ENCODE measurements at regions of chr1 and their contacts with region 1.

Region 1: GRCh38 chr1:194069168-194069830 is 882.9 kb upstream of the B3GALT2 start:
- DNase-seq: peak; percentile 81 to 90 (median 86)
- ATAC-seq: peak; percentile 94 to 98 (median 96)
- H3K4me3 ChIP-seq: no peak overlapping the region
- H3K27ac ChIP-seq: peak overlapping the region; percentile 39 to 94 (median 80)
- H3K4me1 ChIP-seq: peaks cover 0 to 28% (median 2%) of the 10 kb centered on the region in 12 donors
- H3K27me3 ChIP-seq: no peaks in the 10 kb centered on the region
- CTCF ChIP-seq: no peak
- POLR2A ChIP-seq: no peak

Region 2: DNA sequence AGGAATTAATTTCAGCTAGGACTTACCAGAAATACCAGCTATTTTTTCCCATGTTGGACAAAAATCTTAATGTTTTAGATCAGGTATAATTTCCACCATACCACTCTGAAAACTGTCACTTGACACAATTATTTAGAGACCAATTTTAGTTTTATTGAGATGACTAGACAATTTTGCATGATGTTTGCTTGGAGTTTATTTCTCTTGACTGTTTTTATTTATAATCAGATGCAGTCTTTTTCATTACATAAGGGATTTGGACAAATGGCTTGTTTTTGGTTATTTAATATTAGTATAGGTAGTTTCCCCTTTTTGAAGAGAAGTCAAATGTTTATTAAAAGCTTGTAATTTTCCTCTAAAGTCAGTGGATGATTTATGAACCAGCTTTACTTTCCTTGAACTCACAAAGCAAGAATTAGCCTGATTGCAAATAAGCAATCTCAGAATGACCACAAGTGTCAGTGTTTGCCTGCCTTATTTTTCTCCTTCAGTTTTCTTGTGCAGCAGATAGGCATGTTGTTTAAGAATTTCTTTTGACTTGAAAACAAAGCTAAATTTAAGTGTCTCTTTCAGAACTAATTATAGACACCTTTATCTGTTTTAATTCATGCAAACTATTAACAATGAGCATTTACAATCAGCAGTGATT is 879.1 kb before region 1 on chr1:
- intact Hi-C with region 1: loop called in 4 of 10 experiments (anchors 1 to 10 kb)
- DNase-seq: no peak
- ATAC-seq: peak in 1 of 4 donors; percentile 48
- H3K4me3 ChIP-seq: no peak overlapping the region
- H3K27ac ChIP-seq: peak overlapping the region in 8 of 12 donors; percentile 20 to 78 (median 74)
- H3K4me1 ChIP-seq: peaks cover 0 to 50% (median 28%) of the 10 kb centered on the region in 12 donors
- H3K27me3 ChIP-seq: no peaks in the 10 kb centered on the region
- CTCF ChIP-seq: peak in 10 of 12 donors; percentile 19 to 56 (median 36)
- POLR2A ChIP-seq: no peak

Region 3: GRCh38 chr1:193406901-193407300 is 662.4 kb before region 1 on chr1:
- intact Hi-C with region 1: loop called in 2 of 10 experiments (anchors 10 kb)
- DNase-seq: no peak
- ATAC-seq: peak in 1 of 4 donors; percentile 31
- H3K4me3 ChIP-seq: no peak overlapping the region
- H3K27ac ChIP-seq: peak overlapping the region in 3 of 12 donors; percentile 0 to 26 (median 13)
- H3K4me1 ChIP-seq: peaks cover 0 to 28% (median 8%) of the 10 kb centered on the region in 12 donors
- H3K27me3 ChIP-seq: no peaks in the 10 kb centered on the region
- CTCF ChIP-seq: peak; percentile 50 to 81 (median 73)
- POLR2A ChIP-seq: no peak

Region 4: GRCh38 chr1:193654951-193655705 is 414.2 kb before region 1 on chr1:
- intact Hi-C with region 1: loop called in 3 of 10 experiments (anchors 5 to 10 kb)
- DNase-seq: peak in 4 of 5 donors; percentile 34 to 78 (median 62)
- ATAC-seq: peak; percentile 87 to 99 (median 94)
- H3K4me3 ChIP-seq: no peak overlapping the region
- H3K27ac ChIP-seq: peak overlapping the region in 2 of 12 donors; percentile 11 to 42
- H3K4me1 ChIP-seq: peaks cover 0 to 12% (median 0%) of the 10 kb centered on the region in 12 donors
- H3K27me3 ChIP-seq: no peaks in the 10 kb centered on the region
- CTCF ChIP-seq: no peak
- POLR2A ChIP-seq: no peak

Region 5: GRCh38 chr1:193951984-193952383 is 117.3 kb before region 1 on chr1:
- intact Hi-C with region 1: loop called in 2 of 10 experiments (anchors 2 to 10 kb)
- DNase-seq: no peak
- ATAC-seq: peak in 3 of 4 donors; percentile 45 to 46 (median 45)
- H3K4me3 ChIP-seq: no peak overlapping the region
- H3K27ac ChIP-seq: peak overlapping the region in 11 of 12 donors; percentile 12 to 70 (median 35)
- H3K4me1 ChIP-seq: peaks cover 0 to 5% (median 0%) of the 10 kb centered on the region in 12 donors
- H3K27me3 ChIP-seq: no peaks in the 10 kb centered on the region
- CTCF ChIP-seq: no peak
- POLR2A ChIP-seq: no peak

Region 6: GRCh38 chr1:193960499-193960898 is 108.8 kb before region 1 on chr1:
- intact Hi-C with region 1: loop called in 2 of 10 experiments (anchors 10 kb)
- DNase-seq: no peak
- ATAC-seq: peak; percentile 48 to 80 (median 62)
- H3K4me3 ChIP-seq: no peak overlapping the region
- H3K27ac ChIP-seq: peak overlapping the region in 10 of 12 donors; percentile 37 to 82 (median 56)
- H3K4me1 ChIP-seq: peaks cover 0 to 18% (median 0%) of the 10 kb centered on the region in 12 donors
- H3K27me3 ChIP-seq: no peaks in the 10 kb centered on the region
- CTCF ChIP-seq: no peak
- POLR2A ChIP-seq: no peak

Region 7: GRCh38 chr1:193971595-193971994 is 97.7 kb before region 1 on chr1:
- intact Hi-C with region 1: loop called in 3 of 10 experiments (anchors 10 kb)
- DNase-seq: no peak
- ATAC-seq: peak in 1 of 4 donors; percentile 51
- H3K4me3 ChIP-seq: no peak overlapping the region
- H3K27ac ChIP-seq: peak overlapping the region in 7 of 12 donors; percentile 5 to 59 (median 28)
- H3K4me1 ChIP-seq: peaks cover 0 to 3% (median 0%) of the 10 kb centered on the region in 12 donors
- H3K27me3 ChIP-seq: no peaks in the 10 kb centered on the region
- CTCF ChIP-seq: no peak
- POLR2A ChIP-seq: no peak

Measured in heart left ventricle (tissue), 16 donors.